ENCODE measurements at regions of chr16 and their contacts with region 1.

Region 1: DNA sequence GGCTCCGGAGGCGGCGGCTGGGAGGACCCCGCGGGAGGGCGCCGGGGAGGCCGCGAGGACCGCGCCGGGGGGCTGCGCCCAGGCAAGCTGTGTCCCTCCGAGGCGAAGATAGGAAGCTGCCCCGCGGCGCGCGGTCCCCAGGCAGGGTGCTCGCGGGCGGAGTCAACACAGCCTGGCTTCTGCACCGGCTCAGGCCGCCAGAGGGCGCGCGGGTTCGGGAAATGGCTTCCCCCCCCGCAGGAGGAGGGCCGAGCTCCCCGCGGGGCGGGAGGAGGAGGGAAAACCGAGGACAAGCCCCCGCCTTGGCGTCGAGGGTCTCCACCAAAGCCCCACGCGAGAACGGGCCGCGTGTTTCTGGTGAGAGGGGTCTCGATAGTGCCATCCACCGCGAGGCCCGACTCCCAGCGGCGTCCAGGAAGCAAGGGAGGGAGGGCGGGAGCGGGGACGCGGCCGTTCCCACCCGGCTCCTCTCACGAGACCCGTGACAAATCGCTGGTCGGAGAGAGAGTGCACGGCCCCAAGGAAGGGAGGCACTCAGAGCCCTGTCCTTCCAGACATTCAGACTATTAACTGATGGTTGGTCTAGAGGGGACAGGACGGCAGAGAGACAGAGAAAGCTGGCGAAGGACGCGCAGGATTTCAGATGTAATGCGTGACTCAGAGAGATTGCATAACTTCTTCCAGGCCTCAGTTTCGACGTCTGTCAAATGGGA is 64.4 kb upstream of the DNAJA2 start:
- DNase-seq: peak; percentile 49
- ATAC-seq: peak; percentile 95
- H3K4me3 ChIP-seq: peak overlapping the region; percentile 46 to 67
- H3K27ac ChIP-seq: peak overlapping the region; percentile 43; the same call in 1 of the 2 replicates
- H3K4me1 ChIP-seq: peaks cover 5 to 10% of the 10 kb centered on the region in 2 experiments; a peak in 2 of 4 replicates
- H3K27me3 ChIP-seq: no peaks in the 10 kb centered on the region
- CTCF ChIP-seq: peak; percentile 55 to 86 (median 78); a peak in 5 of 6 replicates
- POLR2A ChIP-seq: no peak
- RAD21 ChIP-seq: peak; percentile 81

Region 2: GRCh38 chr16:46937536-46937935 is 100.4 kb before region 1 on chr16:
- CTCF ChIA-PET with region 1: no interaction called
- POLR2A ChIA-PET with region 1: no interaction called
- RAD21 ChIA-PET with region 1: no interaction called
- intact Hi-C with region 1: no loop called
- DNase-seq: no peak
- ATAC-seq: no peak
- H3K4me3 ChIP-seq: no peak overlapping the region
- H3K27ac ChIP-seq: no peak overlapping the region
- H3K4me1 ChIP-seq: no peaks in the 10 kb centered on the region
- H3K27me3 ChIP-seq: no peaks in the 10 kb centered on the region
- CTCF ChIP-seq: no peak
- POLR2A ChIP-seq: no peak
- RAD21 ChIP-seq: no peak

Region 3: DNA sequence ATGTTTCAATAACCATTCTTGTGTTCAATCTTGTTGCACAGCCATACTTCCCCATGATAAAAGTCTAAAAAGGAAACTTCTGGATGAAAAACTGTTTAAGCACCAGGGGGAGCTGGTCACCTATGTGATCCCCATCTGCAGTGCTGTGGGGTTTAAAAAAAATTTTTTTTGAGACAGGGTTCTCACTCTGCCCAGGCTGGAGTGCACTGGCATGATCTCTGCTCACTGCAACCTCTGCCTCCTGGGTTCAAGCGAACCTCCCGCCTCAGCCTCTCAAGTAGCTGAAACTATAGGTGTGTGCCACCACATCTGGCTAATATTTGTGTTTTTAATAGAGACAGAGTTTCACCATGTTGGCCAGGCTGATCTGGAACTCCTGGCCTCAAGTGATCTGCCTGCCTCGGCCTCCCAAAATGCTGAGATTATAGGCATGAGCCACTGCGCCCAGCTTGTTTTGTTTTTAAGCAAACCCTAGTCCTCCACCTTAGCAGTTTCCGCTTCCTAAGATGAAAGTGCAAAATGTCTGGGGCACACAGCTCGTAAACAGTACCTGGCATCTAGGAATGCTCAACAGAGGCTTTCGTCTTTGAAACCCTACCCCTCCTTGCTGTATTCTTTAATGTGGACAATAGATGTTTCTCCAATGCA is 89.9 kb before region 1 on chr16:
- CTCF ChIA-PET with region 1: interaction called, 6 read pairs
- POLR2A ChIA-PET with region 1: no interaction called
- RAD21 ChIA-PET with region 1: interaction called in 1 of 2 experiments, 3 read pairs
- intact Hi-C with region 1: loop called (anchors 5 kb)
- DNase-seq: peak; percentile 29
- ATAC-seq: peak; percentile 90
- H3K4me3 ChIP-seq: no peak overlapping the region
- H3K27ac ChIP-seq: no peak overlapping the region
- H3K4me1 ChIP-seq: no peaks in the 10 kb centered on the region
- H3K27me3 ChIP-seq: no peaks in the 10 kb centered on the region
- CTCF ChIP-seq: peak; percentile 63 to 75 (median 65)
- POLR2A ChIP-seq: no peak
- RAD21 ChIP-seq: peak; percentile 89

Region 4: GRCh38 chr16:47141773-47142485 is 104.0 kb after region 1 on chr16:
- CTCF ChIA-PET with region 1: interaction called, 18 read pairs
- POLR2A ChIA-PET with region 1: interaction called, 4 read pairs
- RAD21 ChIA-PET with region 1: interaction called, 3 read pairs
- intact Hi-C with region 1: loop called (anchors 5 kb)
- DNase-seq: peak; percentile 85
- ATAC-seq: peak; percentile 82
- H3K4me3 ChIP-seq: peak overlapping the region; percentile 43 to 52
- H3K27ac ChIP-seq: no peak overlapping the region
- H3K4me1 ChIP-seq: peaks cover 8 to 44% of the 10 kb centered on the region in 2 experiments; a peak in 3 of 4 replicates
- H3K27me3 ChIP-seq: no peaks in the 10 kb centered on the region
- CTCF ChIP-seq: peak; percentile 93 to 97 (median 94)
- POLR2A ChIP-seq: no peak
- RAD21 ChIP-seq: peak; percentile 85

Region 5: DNA sequence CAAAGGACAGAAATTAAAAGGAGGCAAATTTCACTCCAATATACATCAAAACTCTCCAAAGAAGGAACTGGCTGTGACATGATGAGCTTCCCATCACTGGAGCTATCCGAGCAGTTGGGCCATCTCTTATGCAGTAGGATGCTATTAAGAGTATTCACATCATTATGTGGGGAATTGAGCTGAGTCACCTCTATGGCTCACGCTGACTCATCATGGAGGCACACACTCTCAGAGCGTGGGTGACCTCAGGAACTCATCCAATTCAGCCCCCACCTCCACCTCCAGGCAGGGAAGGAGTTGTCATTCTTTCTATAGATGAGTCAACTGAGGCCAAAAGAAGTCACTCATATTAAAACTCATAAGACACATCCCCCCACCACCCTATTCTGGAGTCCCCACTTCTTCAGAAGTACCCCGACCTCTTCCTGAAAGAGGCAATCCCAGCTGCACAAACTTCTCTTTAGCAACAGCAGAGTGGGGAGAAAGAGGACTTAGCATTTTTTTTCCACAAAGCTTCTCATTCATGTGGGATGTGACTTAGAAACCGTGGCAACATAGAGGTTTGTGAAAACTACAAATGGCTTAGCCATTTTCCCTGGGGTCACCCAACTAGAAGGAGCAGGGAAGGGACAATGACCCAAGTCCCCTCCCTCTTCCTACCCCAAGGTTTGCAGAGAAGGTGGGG is 1085.3 kb after region 1 on chr16:
- CTCF ChIA-PET with region 1: interaction called, 6 read pairs
- POLR2A ChIA-PET with region 1: no interaction called
- RAD21 ChIA-PET with region 1: no interaction called
- intact Hi-C with region 1: loop called (anchors 5 kb)
- DNase-seq: peak; percentile 85
- ATAC-seq: peak; percentile 95
- H3K4me3 ChIP-seq: peak overlapping the region in 1 of 2 experiments; percentile 8; a peak in 1 of 4 replicates
- H3K27ac ChIP-seq: peak overlapping the region; percentile 8; the same call in 1 of the 2 replicates
- H3K4me1 ChIP-seq: peaks cover 10 to 32% of the 10 kb centered on the region in 2 experiments
- H3K27me3 ChIP-seq: no peaks in the 10 kb centered on the region
- CTCF ChIP-seq: no peak
- POLR2A ChIP-seq: no peak
- RAD21 ChIP-seq: no peak